Naive thymus-derived CD4-positive, alpha-beta T cell (primary cell): ENCODE measurements at regions of chr5 and their contacts with region 1.

Region 1: GRCh38 chr5:149551200-149552037 is at the start of gene CSNK1A1:
- DNase-seq: peak; percentile 97 to 99 (median 98)
- ATAC-seq: peak; percentile 93
- H3K4me3 ChIP-seq: peak within 1 kb of the TSS; percentile 97
- H3K4me3 Mint-ChIP-seq: peak within 1 kb of the TSS; percentile 91 to 99 (median 98)
- H3K27ac ChIP-seq: peak within 1 kb of the TSS; percentile 96
- H3K27ac Mint-ChIP-seq: peak within 1 kb of the TSS; percentile 95 to 99 (median 97)
- H3K4me1 ChIP-seq: peaks cover 27 to 31% of the 10 kb centered on the region in 2 donors
- H3K4me1 Mint-ChIP-seq: peaks cover 15 to 36% (median 32%) of the 10 kb centered on the region in 7 donors
- H3K27me3 ChIP-seq: no peaks in the 10 kb centered on the region
- H3K27me3 Mint-ChIP-seq: peaks cover 0 to 5% (median 0%) of the 10 kb centered on the region in 5 donors
- total RNA-seq, gene CSNK1A1: 168 to 217 (median 181) TPM

Region 2: GRCh38 chr5:148826053-148826738 is 725.2 kb before region 1 on chr5 and contains the start of gene ADRB2:
- CTCF ChIA-PET with region 1: no interaction called
- POLR2A ChIA-PET with region 1: no interaction called
- intact Hi-C with region 1: loop called in 1 of 2 experiments (anchors 5 kb)
- DNase-seq: peak; percentile 74 to 83 (median 79)
- ATAC-seq: peak; percentile 94
- H3K4me3 ChIP-seq: peak within 1 kb of the TSS; percentile 75
- H3K4me3 Mint-ChIP-seq: peak within 1 kb of the TSS; percentile 83 to 94 (median 89)
- H3K27ac ChIP-seq: peak within 1 kb of the TSS; percentile 54
- H3K27ac Mint-ChIP-seq: peak within 1 kb of the TSS; percentile 16 to 82 (median 70)
- H3K4me1 ChIP-seq: peaks cover 7 to 18% of the 10 kb centered on the region in 2 donors
- H3K4me1 Mint-ChIP-seq: peaks cover 20 to 43% (median 31%) of the 10 kb centered on the region in 7 donors
- H3K27me3 ChIP-seq: no peaks in the 10 kb centered on the region
- H3K27me3 Mint-ChIP-seq: peaks cover 0 to 76% (median 5%) of the 10 kb centered on the region in 5 donors
- total RNA-seq, gene ADRB2: 0.36 to 14.4 (median 1.3) TPM

Region 3: DNA sequence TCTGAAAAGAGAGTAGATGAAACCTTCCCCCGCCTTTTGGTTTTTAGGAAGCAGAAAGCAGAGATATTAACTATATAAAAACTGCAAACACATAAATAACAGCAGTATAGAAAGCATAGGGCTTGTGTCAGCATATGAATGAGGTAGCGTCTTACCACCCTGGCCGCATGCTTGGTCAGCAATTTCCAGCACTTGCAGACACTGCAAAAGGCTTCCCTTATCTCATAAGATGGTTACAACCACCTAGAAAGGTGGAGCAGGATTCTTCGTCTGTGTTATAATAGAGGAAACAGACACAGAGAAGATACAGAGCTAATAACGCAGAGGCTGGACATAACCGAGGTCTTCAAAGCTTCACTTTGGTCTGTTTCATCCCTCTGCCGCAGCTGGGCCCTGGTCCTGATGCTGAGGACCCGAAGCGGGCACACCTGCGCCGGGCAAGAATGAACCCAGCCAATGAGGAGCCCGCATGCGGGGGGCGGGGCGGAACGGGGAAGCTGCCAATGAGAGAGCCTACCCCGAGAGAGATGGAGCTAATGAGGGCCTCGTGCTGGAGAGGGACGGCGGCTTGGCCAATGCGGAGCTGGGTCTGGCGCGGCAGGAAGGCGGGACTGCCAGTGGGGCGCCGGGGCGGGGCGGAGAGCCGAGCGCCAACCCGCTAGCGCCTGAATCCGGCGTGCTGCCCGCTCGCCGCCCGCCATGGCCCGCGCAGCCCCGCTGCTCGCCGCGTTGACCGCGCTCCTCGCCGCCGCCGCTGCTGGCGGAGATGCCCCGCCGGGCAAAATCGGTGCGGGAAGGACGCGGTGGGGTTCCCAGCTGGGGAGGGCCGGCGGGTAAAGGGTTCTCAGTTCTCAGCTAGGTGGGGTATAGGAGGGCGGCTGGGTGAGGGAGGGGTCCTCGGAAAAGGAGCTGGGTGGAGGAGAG is 193.8 kb before region 1 on chr5 and contains the start of gene PCYOX1L:
- CTCF ChIA-PET with region 1: no interaction called
- POLR2A ChIA-PET with region 1: interaction called, 20 read pairs
- intact Hi-C with region 1: loop called (anchors 1 kb)
- DNase-seq: peak; percentile 88 to 98 (median 94)
- ATAC-seq: peak; percentile 99
- H3K4me3 ChIP-seq: peak within 1 kb of the TSS; percentile 80
- H3K4me3 Mint-ChIP-seq: peak within 1 kb of the TSS; percentile 80 to 99 (median 94)
- H3K27ac ChIP-seq: peak within 1 kb of the TSS; percentile 83
- H3K27ac Mint-ChIP-seq: peak within 1 kb of the TSS; percentile 83 to 96 (median 92)
- H3K4me1 ChIP-seq: peaks cover 15 to 36% of the 10 kb centered on the region in 2 donors
- H3K4me1 Mint-ChIP-seq: peaks cover 41 to 82% (median 65%) of the 10 kb centered on the region in 7 donors
- H3K27me3 ChIP-seq: no peaks in the 10 kb centered on the region
- H3K27me3 Mint-ChIP-seq: no peaks in the 10 kb centered on the region
- total RNA-seq, gene PCYOX1L: 29.7 to 53.7 (median 36.3) TPM

Region 4: GRCh38 chr5:149517461-149518122 is 33.8 kb before region 1 on chr5:
- CTCF ChIA-PET with region 1: no interaction called
- POLR2A ChIA-PET with region 1: interaction called, 9 read pairs
- intact Hi-C with region 1: loop called (anchors 2 to 5 kb)
- DNase-seq: no peak
- ATAC-seq: no peak
- H3K4me3 ChIP-seq: no peak overlapping the region
- H3K4me3 Mint-ChIP-seq: peak overlapping the region in 6 of 10 donors; percentile 10 to 48 (median 22)
- H3K27ac ChIP-seq: no peak overlapping the region
- H3K27ac Mint-ChIP-seq: peak overlapping the region in 7 of 9 donors; percentile 19 to 83 (median 63)
- H3K4me1 ChIP-seq: peaks cover 0 to 16% of the 10 kb centered on the region in 2 donors
- H3K4me1 Mint-ChIP-seq: peaks cover 33 to 90% (median 82%) of the 10 kb centered on the region in 7 donors
- H3K27me3 ChIP-seq: no peaks in the 10 kb centered on the region
- H3K27me3 Mint-ChIP-seq: no peaks in the 10 kb centered on the region

Region 5: GRCh38 chr5:149576021-149576420 is 24.6 kb after region 1 on chr5:
- CTCF ChIA-PET with region 1: no interaction called
- POLR2A ChIA-PET with region 1: interaction called, 9 read pairs
- intact Hi-C with region 1: loop called in 1 of 2 experiments (anchors 1 kb)
- DNase-seq: peak in 6 of 9 donors; percentile 12 to 53 (median 38)
- ATAC-seq: peak; percentile 42
- H3K4me3 ChIP-seq: no peak overlapping the region
- H3K4me3 Mint-ChIP-seq: peak overlapping the region in 6 of 10 donors; percentile 12 to 63 (median 34)
- H3K27ac ChIP-seq: no peak overlapping the region
- H3K27ac Mint-ChIP-seq: peak overlapping the region; percentile 74 to 92 (median 83)
- H3K4me1 ChIP-seq: peaks cover 0 to 13% of the 10 kb centered on the region in 2 donors
- H3K4me1 Mint-ChIP-seq: peaks cover 0 to 32% (median 23%) of the 10 kb centered on the region in 7 donors
- H3K27me3 ChIP-seq: no peaks in the 10 kb centered on the region
- H3K27me3 Mint-ChIP-seq: peaks cover 0 to 15% (median 0%) of the 10 kb centered on the region in 5 donors

Region 6: GRCh38 chr5:150000256-150000989 is 449.0 kb after region 1 on chr5 and contains the starts of genes HMGXB3 and TIGD6:
- CTCF ChIA-PET with region 1: no interaction called
- POLR2A ChIA-PET with region 1: no interaction called
- intact Hi-C with region 1: loop called (anchors 1 kb)
- DNase-seq: peak; percentile 64 to 87 (median 74)
- ATAC-seq: peak; percentile 83
- H3K4me3 ChIP-seq: peak within 1 kb of the TSS; percentile 76
- H3K4me3 Mint-ChIP-seq: peak within 1 kb of the TSS; percentile 86 to 99 (median 93)
- H3K27ac ChIP-seq: peak within 1 kb of the TSS; percentile 80
- H3K27ac Mint-ChIP-seq: peak within 1 kb of the TSS; percentile 75 to 98 (median 94)
- H3K4me1 ChIP-seq: peaks cover 18 to 23% of the 10 kb centered on the region in 2 donors
- H3K4me1 Mint-ChIP-seq: peaks cover 33 to 55% (median 46%) of the 10 kb centered on the region in 7 donors
- H3K27me3 ChIP-seq: no peaks in the 10 kb centered on the region
- H3K27me3 Mint-ChIP-seq: no peaks in the 10 kb centered on the region
- total RNA-seq, gene HMGXB3: 27.2 to 40.6 (median 34.5) TPM
- total RNA-seq, gene TIGD6: 2.3 to 7.4 (median 2.8) TPM

Region 7: GRCh38 chr5:150449517-150450339 is 898.3 kb after region 1 on chr5 and contains the start of gene RPS14:
- CTCF ChIA-PET with region 1: no interaction called
- POLR2A ChIA-PET with region 1: no interaction called
- intact Hi-C with region 1: loop called in 1 of 2 experiments (anchors 10 kb)
- DNase-seq: peak; percentile 89 to 98 (median 97)
- ATAC-seq: peak; percentile 97
- H3K4me3 ChIP-seq: peak within 1 kb of the TSS; percentile 68
- H3K4me3 Mint-ChIP-seq: peak within 1 kb of the TSS; percentile 89 to 100 (median 96)
- H3K27ac ChIP-seq: peak within 1 kb of the TSS; percentile 100
- H3K27ac Mint-ChIP-seq: peak within 1 kb of the TSS; percentile 97 to 100 (median 100)
- H3K4me1 ChIP-seq: peaks cover 18 to 23% of the 10 kb centered on the region in 2 donors
- H3K4me1 Mint-ChIP-seq: peaks cover 21 to 44% (median 37%) of the 10 kb centered on the region in 7 donors
- H3K27me3 ChIP-seq: no peaks in the 10 kb centered on the region
- H3K27me3 Mint-ChIP-seq: no peaks in the 10 kb centered on the region
- total RNA-seq, gene RPS14: 2,331 to 7,378 (median 6,414) TPM